ENCODE measurements at regions of chr13 and their contacts with region 1.

Region 1: GRCh38 chr13:105847527-105848291 is 687.8 kb downstream of the EFNB2 start:
- DNase-seq: no peak
- ATAC-seq: no peak
- H3K4me3 ChIP-seq: no peak overlapping the region
- H3K4me3 Mint-ChIP-seq: no peak overlapping the region
- H3K27ac ChIP-seq: no peak overlapping the region
- H3K27ac Mint-ChIP-seq: no peak overlapping the region
- H3K4me1 ChIP-seq: no peaks in the 10 kb centered on the region
- H3K4me1 Mint-ChIP-seq: no peaks in the 10 kb centered on the region
- H3K27me3 ChIP-seq: no peaks in the 10 kb centered on the region
- H3K27me3 Mint-ChIP-seq: no peaks in the 10 kb centered on the region

Region 2: DNA sequence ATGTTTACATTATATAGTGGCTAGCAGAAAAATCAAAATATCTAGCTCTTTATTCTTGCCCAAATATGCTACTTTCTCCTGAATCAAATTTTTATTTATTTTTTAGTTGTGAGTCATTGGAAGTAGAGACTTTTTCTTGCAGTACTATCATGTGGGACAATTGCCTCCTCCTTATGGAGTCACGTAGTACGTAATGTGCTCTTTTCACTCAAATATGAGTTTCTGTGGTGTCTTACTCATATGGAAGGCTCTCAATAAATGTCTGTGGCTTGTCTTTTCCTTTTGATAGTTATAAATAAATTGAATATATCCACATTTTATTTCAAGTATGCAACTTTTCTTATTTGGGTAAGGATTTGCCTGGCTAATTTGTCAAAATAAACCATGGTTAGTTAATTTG is 1370.4 kb before region 1 on chr13:
- CTCF ChIA-PET with region 1: no interaction called
- POLR2A ChIA-PET with region 1: interaction called in 1 of 2 experiments, 14 read pairs
- DNase-seq: no peak
- ATAC-seq: no peak
- H3K4me3 ChIP-seq: no peak overlapping the region
- H3K4me3 Mint-ChIP-seq: no peak overlapping the region
- H3K27ac ChIP-seq: no peak overlapping the region
- H3K27ac Mint-ChIP-seq: no peak overlapping the region
- H3K4me1 ChIP-seq: no peaks in the 10 kb centered on the region
- H3K4me1 Mint-ChIP-seq: no peaks in the 10 kb centered on the region
- H3K27me3 ChIP-seq: no peaks in the 10 kb centered on the region
- H3K27me3 Mint-ChIP-seq: no peaks in the 10 kb centered on the region

Measured in T-cell (primary cell).